ENCODE measurements at regions of chr16 and their contacts with region 1.

Region 1: GRCh38 chr16:81403616-81404373 is 40.8 kb upstream of the CMIP start:
- DNase-seq: peak; percentile 69
- H3K4me3 ChIP-seq: peak overlapping the region in 1 of 3 experiments; percentile 36
- H3K27ac ChIP-seq: peak overlapping the region; percentile 45
- H3K4me1 ChIP-seq: peaks cover 40% of the 10 kb centered on the region
- H3K27me3 ChIP-seq: no peaks in the 10 kb centered on the region
- CTCF ChIP-seq: peak; percentile 66 to 93

Region 2: GRCh38 chr16:81366316-81366932 is 37.4 kb before region 1 on chr16:
- CTCF ChIA-PET with region 1: no interaction called
- dilution Hi-C with region 1: no loop called
- in situ Hi-C with region 1: no loop called
- intact Hi-C with region 1: loop called (anchors 2 kb)
- DNase-seq: peak; percentile 42
- H3K4me3 ChIP-seq: no peak overlapping the region
- H3K27ac ChIP-seq: no peak overlapping the region
- H3K4me1 ChIP-seq: peaks cover 3% of the 10 kb centered on the region
- H3K27me3 ChIP-seq: no peaks in the 10 kb centered on the region
- CTCF ChIP-seq: peak; percentile 53 to 57

Region 3: DNA sequence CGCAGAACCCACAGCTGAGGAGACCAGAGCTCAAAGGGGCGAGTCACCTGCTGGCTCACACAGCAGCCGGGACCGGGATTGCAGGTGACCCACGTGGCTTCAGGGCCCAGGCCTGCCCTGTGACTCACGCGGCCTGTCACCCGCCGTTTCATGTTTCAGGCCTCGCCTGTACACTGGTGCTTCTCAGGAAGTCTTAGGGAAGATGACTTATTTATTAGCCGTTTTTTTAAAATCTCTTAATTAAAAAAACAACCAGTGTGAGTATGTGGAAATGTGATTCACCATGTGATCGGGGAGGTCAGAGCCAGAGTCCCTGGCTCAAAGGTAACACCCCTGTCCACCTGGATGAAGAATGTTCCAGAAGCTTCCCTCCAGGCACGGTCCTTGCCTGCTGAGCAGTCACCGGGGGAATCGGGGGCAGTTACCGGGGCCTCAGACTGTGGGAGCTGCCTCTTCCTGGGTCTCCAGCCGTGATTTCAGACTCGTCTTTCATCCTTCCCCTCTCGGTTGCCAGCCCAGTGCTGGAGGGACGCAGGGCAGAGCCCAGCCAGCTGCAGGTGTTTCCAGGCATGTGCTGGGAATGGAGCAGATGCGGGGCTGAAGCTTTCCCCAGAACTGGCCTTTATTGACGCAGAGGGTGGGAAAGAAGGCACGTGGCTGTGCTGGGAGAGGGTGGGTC is 90.1 kb after region 1 on chr16:
- CTCF ChIA-PET with region 1: no interaction called
- dilution Hi-C with region 1: no loop called
- in situ Hi-C with region 1: no loop called
- intact Hi-C with region 1: loop called (anchors 2 kb)
- DNase-seq: peak; percentile 97
- H3K4me3 ChIP-seq: no peak overlapping the region
- H3K27ac ChIP-seq: peak overlapping the region; percentile 90
- H3K4me1 ChIP-seq: peaks cover 56% of the 10 kb centered on the region
- H3K27me3 ChIP-seq: no peaks in the 10 kb centered on the region
- CTCF ChIP-seq: no peak

Region 4: GRCh38 chr16:81696961-81697615 is 293.3 kb after region 1 on chr16:
- CTCF ChIA-PET with region 1: no interaction called
- dilution Hi-C with region 1: loop called (anchors 10 kb)
- in situ Hi-C with region 1: loop called in 1 of 2 experiments (anchors 10 kb)
- intact Hi-C with region 1: loop called (anchors 1 kb)
- DNase-seq: peak; percentile 48
- H3K4me3 ChIP-seq: no peak overlapping the region
- H3K27ac ChIP-seq: no peak overlapping the region
- H3K4me1 ChIP-seq: peaks cover 40% of the 10 kb centered on the region
- H3K27me3 ChIP-seq: no peaks in the 10 kb centered on the region
- CTCF ChIP-seq: peak; percentile 76 to 80

Region 5: GRCh38 chr16:81730090-81731051 is 326.6 kb after region 1 on chr16:
- CTCF ChIA-PET with region 1: interaction called, 10 read pairs
- dilution Hi-C with region 1: no loop called
- in situ Hi-C with region 1: no loop called
- intact Hi-C with region 1: no loop called
- DNase-seq: peak; percentile 53
- H3K4me3 ChIP-seq: peak overlapping the region in 2 of 3 experiments; percentile 3 to 29
- H3K27ac ChIP-seq: peak overlapping the region; percentile 15
- H3K4me1 ChIP-seq: peaks cover 12% of the 10 kb centered on the region
- H3K27me3 ChIP-seq: no peaks in the 10 kb centered on the region
- CTCF ChIP-seq: peak; percentile 54 to 75

Region 6: DNA sequence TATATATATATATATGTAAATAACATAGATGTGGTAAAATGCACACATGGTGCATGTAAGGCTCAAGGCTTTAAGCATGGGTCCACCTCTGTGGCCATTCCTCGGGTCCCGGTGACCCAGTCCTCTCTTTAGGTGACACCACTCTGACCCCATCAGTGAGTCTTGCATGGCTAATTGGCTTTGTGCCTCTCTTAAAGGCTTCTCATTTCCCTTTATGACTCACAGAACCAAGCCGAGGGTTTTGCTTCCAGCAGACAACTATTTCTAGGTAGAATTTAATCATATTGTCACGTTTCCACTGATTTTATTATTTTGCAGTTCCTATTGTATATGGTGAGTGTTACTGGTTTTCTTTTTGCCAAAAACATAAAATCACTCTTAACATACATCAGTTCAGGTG is 435.0 kb after region 1 on chr16:
- CTCF ChIA-PET with region 1: no interaction called
- dilution Hi-C with region 1: no loop called
- in situ Hi-C with region 1: no loop called
- intact Hi-C with region 1: no loop called
- DNase-seq: peak; percentile 6
- H3K4me3 ChIP-seq: no peak overlapping the region
- H3K27ac ChIP-seq: no peak overlapping the region
- H3K4me1 ChIP-seq: no peaks in the 10 kb centered on the region
- H3K27me3 ChIP-seq: peaks cover 2% of the 10 kb centered on the region
- CTCF ChIP-seq: no peak

Measured in mammary epithelial cell (primary cell).